Activated naive CD4-positive, alpha-beta T cell treated with anti-CD3 and anti-CD28 coated beads, Interleukin-2, amount 10 ng/mL, durations not matched to agents 7 days and 5 days (primary cell): ENCODE measurements at regions of chr17 and their contacts with region 1.

Region 1: GRCh38 chr17:40121181-40122135 is at the start of gene MSL1:
- DNase-seq: peak; percentile 89
- H3K4me3 Mint-ChIP-seq: peak within 1 kb of the TSS; percentile 83
- H3K27ac Mint-ChIP-seq: peak within 1 kb of the TSS; percentile 82
- H3K4me1 Mint-ChIP-seq: peaks cover 37% of the 10 kb centered on the region
- H3K27me3 Mint-ChIP-seq: peaks cover 3% of the 10 kb centered on the region

Region 2: DNA sequence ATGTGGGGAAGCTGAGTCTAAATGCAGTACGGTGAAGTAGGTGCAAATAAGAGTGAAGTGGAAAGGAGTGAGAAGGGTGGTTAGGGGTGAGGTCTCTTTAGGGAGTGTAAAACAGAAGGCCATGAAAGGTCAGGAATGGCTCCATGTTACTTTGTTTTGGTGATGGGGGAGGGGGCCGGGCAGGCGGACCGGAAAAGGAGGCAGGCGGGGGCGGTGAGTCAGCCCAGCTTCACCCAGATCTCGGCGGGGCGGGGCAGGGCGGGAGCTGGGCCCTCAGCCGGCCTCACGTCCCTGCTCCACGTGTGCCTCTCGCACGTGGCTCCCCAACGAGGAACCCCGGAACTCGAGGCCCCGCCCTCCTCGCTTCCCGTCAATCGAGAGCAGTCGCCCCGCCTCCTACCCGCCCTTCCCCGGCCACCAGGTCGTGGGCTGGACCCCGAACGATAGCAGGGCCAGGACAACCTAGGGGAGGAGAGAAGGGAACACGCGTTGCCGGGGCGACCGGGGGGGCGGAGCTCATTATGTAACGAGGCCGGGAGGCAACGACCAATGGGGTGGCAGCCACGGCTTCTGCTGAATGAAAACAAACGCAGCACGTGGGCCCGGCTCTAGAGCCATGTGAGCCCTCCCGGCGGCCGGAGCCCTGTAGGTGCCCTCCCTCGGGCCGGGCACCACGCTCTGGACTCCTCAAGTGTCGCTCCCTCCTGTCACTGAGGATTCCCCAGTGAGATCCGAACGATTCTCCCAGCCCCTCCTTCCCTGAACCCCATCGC is 22.4 kb before region 1 on chr17:
- CTCF ChIA-PET with region 1: no interaction called
- DNase-seq: peak; percentile 99
- H3K4me3 Mint-ChIP-seq: peak overlapping the region; percentile 81
- H3K27ac Mint-ChIP-seq: peak overlapping the region; percentile 87
- H3K4me1 Mint-ChIP-seq: peaks cover 91% of the 10 kb centered on the region
- H3K27me3 Mint-ChIP-seq: peaks cover 26% of the 10 kb centered on the region

Region 3: DNA sequence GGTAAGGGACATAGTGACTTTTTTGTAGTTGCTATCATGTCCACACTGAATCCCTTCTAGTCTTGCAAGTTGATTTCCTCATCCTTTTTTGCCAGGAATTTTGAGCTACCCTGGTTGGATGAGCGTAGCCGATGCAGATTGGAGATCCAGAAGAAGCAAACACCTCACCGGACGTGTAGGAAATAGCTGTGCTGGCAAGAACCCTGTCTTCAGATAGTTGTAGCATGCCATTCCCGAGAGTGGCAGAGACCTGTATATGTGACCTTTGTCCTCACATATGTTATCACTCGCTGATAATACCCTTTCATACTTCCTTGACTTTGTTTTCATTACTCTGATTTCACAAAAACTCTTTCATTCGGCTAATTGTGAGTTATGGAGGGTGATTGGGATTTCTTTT is 12.7 kb after region 1 on chr17:
- CTCF ChIA-PET with region 1: interaction called, 11 read pairs
- DNase-seq: no peak
- H3K4me3 Mint-ChIP-seq: no peak overlapping the region
- H3K27ac Mint-ChIP-seq: peak overlapping the region; percentile 39
- H3K4me1 Mint-ChIP-seq: peaks cover 12% of the 10 kb centered on the region
- H3K27me3 Mint-ChIP-seq: no peaks in the 10 kb centered on the region